Ascending aorta (tissue), 2 donors: ENCODE measurements at regions of chr12 and their contacts with region 1.

Region 1: GRCh38 chr12:53231826-53232645 is at the start of gene RARG:
- DNase-seq: peak; percentile 39 to 87
- H3K4me3 ChIP-seq: peak within 1 kb of the TSS; percentile 58 to 70
- H3K27ac ChIP-seq: peak within 1 kb of the TSS; percentile 87 to 88
- H3K4me1 ChIP-seq: peaks cover 5 to 33% of the 10 kb centered on the region in 2 donors
- H3K27me3 ChIP-seq: no peaks in the 10 kb centered on the region
- CTCF ChIP-seq: no peak
- total RNA-seq, gene RARG: 29.8 TPM

Region 2: GRCh38 chr12:53295070-53295890 is 63.2 kb after region 1 on chr12 and contains the start of gene PFDN5:
- intact Hi-C with region 1: loop called (anchors 5 kb)
- DNase-seq: peak; percentile 49 to 94
- H3K4me3 ChIP-seq: peak within 1 kb of the TSS; percentile 56 to 90
- H3K27ac ChIP-seq: peak within 1 kb of the TSS; percentile 85 to 92
- H3K4me1 ChIP-seq: peaks cover 10 to 20% of the 10 kb centered on the region in 2 donors
- H3K27me3 ChIP-seq: no peaks in the 10 kb centered on the region
- CTCF ChIP-seq: no peak
- total RNA-seq, gene PFDN5: 187 TPM